CD4-positive, alpha-beta T cell (primary cell): ENCODE measurements at regions of chr2 and their contacts with region 1.

Region 1: DNA sequence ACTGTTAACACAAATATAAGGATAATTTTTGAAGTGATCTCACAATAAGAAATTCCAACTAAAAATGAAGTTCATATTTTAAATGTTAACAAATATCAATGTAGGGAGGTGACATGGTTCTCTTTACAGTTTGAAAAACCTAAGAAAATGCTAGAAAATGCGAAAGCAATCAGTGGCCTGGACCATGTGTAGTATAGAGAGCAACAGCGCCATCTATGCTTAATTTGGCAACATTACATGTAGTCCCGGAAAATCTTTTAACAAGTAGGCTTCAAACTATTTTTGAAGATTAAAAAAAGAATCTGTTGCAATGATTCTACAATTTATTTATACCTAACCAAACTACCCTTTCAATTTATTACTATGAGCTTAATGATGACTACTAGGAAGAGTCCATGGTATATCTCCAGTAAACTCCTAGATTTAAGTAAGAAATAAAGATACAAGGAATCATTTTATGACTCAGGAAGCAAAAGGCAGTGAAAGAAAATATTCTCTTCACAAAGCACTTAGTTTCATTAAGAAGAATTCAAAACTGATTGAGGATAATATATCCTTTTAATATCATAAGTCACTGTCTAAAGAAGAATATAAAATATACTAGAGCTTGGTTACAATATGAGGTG is 33.3 kb downstream of the NDUFA10 start:
- DNase-seq: peak in 3 of 14 experiments; percentile 55 to 68 (median 66)
- ATAC-seq: peak; percentile 69
- H3K4me3 ChIP-seq: no peak overlapping the region
- H3K4me3 Mint-ChIP-seq: no peak overlapping the region
- H3K27ac ChIP-seq: no peak overlapping the region
- H3K27ac Mint-ChIP-seq: no peak overlapping the region
- H3K4me1 ChIP-seq: no peaks in the 10 kb centered on the region
- H3K4me1 Mint-ChIP-seq: peaks cover 5% of the 10 kb centered on the region
- H3K27me3 ChIP-seq: no peaks in the 10 kb centered on the region
- H3K27me3 Mint-ChIP-seq: no peaks in the 10 kb centered on the region
- CTCF ChIP-seq: peak; percentile 89

Region 2: GRCh38 chr2:239035361-239036078 is 956.3 kb before region 1 on chr2:
- CTCF ChIA-PET with region 1: no interaction called
- POLR2A ChIA-PET with region 1: no interaction called
- intact Hi-C with region 1: loop called (anchors 1 to 2 kb)
- DNase-seq: peak; percentile 47 to 78 (median 62)
- ATAC-seq: peak; percentile 92
- H3K4me3 ChIP-seq: no peak overlapping the region
- H3K4me3 Mint-ChIP-seq: no peak overlapping the region
- H3K27ac ChIP-seq: no peak overlapping the region
- H3K27ac Mint-ChIP-seq: no peak overlapping the region
- H3K4me1 ChIP-seq: peaks cover 7% of the 10 kb centered on the region
- H3K4me1 Mint-ChIP-seq: no peaks in the 10 kb centered on the region
- H3K27me3 ChIP-seq: peaks cover 8 to 13% of the 10 kb centered on the region in 2 experiments
- H3K27me3 Mint-ChIP-seq: peaks cover 8% of the 10 kb centered on the region
- CTCF ChIP-seq: peak; percentile 88

Region 3: DNA sequence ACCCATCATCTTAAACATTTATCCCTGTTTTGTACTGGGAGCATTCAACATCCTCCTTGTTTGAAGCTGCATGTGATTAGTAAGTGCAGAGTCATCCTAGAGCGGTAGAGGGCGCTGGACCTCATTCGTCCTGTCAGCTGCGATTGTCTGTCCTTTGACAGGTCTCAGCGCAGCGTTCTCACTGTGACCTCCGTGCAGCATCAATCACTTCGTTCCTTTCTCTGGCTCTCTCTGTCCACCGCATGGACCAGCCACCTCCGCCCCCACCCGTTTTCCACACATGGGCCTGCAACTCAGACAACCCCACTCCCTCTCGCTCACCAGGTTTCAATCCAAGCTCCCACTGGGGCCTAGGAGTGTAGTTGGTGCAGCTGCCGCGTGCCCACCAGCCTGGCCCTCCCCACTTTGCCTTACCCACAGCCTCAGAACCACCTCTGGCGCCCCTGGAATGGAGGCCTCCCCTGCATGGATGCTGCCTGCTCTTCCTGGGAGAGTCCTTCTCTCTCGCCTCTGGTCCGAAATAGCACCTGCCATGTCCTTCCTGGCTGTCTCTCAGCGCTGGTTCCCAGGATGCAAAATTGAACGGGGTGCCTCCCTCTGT is 57.1 kb before region 1 on chr2:
- CTCF ChIA-PET with region 1: interaction called, 4 read pairs
- POLR2A ChIA-PET with region 1: no interaction called
- intact Hi-C with region 1: loop called (anchors 1 to 10 kb)
- DNase-seq: peak; percentile 31 to 80 (median 54)
- ATAC-seq: peak; percentile 84
- H3K4me3 ChIP-seq: no peak overlapping the region
- H3K4me3 Mint-ChIP-seq: no peak overlapping the region
- H3K27ac ChIP-seq: no peak overlapping the region
- H3K27ac Mint-ChIP-seq: no peak overlapping the region
- H3K4me1 ChIP-seq: peaks cover 4% of the 10 kb centered on the region
- H3K4me1 Mint-ChIP-seq: peaks cover 6% of the 10 kb centered on the region
- H3K27me3 ChIP-seq: no peaks in the 10 kb centered on the region
- H3K27me3 Mint-ChIP-seq: no peaks in the 10 kb centered on the region
- CTCF ChIP-seq: peak; percentile 70

Region 4: GRCh38 chr2:239979243-239980023 is 12.4 kb before region 1 on chr2:
- CTCF ChIA-PET with region 1: no interaction called
- POLR2A ChIA-PET with region 1: no interaction called
- intact Hi-C with region 1: no loop called
- DNase-seq: no peak
- ATAC-seq: no peak
- H3K4me3 ChIP-seq: no peak overlapping the region
- H3K4me3 Mint-ChIP-seq: no peak overlapping the region
- H3K27ac ChIP-seq: no peak overlapping the region
- H3K27ac Mint-ChIP-seq: no peak overlapping the region
- H3K4me1 ChIP-seq: no peaks in the 10 kb centered on the region
- H3K4me1 Mint-ChIP-seq: no peaks in the 10 kb centered on the region
- H3K27me3 ChIP-seq: no peaks in the 10 kb centered on the region
- H3K27me3 Mint-ChIP-seq: no peaks in the 10 kb centered on the region
- CTCF ChIP-seq: no peak

Region 5: DNA sequence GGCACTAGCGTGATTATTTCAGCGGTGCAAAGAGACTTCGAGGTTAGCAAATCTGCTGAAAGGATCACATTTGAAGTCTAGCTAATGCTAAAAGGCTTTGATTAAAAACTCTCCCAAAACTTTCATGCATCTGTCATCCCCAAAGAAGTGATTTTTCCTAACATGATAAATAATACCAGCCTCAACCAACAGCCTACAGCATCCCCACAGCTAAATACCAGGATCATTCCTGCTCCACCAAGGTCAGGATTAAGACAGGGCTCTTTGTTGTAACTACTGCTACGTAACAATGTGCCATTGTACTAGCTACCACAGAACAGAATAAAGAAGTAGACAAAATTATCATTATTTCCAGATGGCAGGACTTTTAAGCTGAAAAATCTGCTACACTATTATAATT is 59.9 kb after region 1 on chr2:
- CTCF ChIA-PET with region 1: no interaction called
- POLR2A ChIA-PET with region 1: no interaction called
- intact Hi-C with region 1: no loop called
- DNase-seq: no peak
- ATAC-seq: no peak
- H3K4me3 ChIP-seq: no peak overlapping the region
- H3K4me3 Mint-ChIP-seq: no peak overlapping the region
- H3K27ac ChIP-seq: no peak overlapping the region
- H3K27ac Mint-ChIP-seq: no peak overlapping the region
- H3K4me1 ChIP-seq: no peaks in the 10 kb centered on the region
- H3K4me1 Mint-ChIP-seq: no peaks in the 10 kb centered on the region
- H3K27me3 ChIP-seq: peaks cover 19 to 31% of the 10 kb centered on the region in 2 experiments
- H3K27me3 Mint-ChIP-seq: peaks cover 78% of the 10 kb centered on the region
- CTCF ChIP-seq: no peak

Region 6: GRCh38 chr2:240077442-240077841 is 85.6 kb after region 1 on chr2:
- CTCF ChIA-PET with region 1: no interaction called
- POLR2A ChIA-PET with region 1: no interaction called
- intact Hi-C with region 1: no loop called
- DNase-seq: no peak
- ATAC-seq: no peak
- H3K4me3 ChIP-seq: no peak overlapping the region
- H3K4me3 Mint-ChIP-seq: no peak overlapping the region
- H3K27ac ChIP-seq: no peak overlapping the region
- H3K27ac Mint-ChIP-seq: no peak overlapping the region
- H3K4me1 ChIP-seq: no peaks in the 10 kb centered on the region
- H3K4me1 Mint-ChIP-seq: no peaks in the 10 kb centered on the region
- H3K27me3 ChIP-seq: peaks cover 3 to 12% of the 10 kb centered on the region in 2 experiments
- H3K27me3 Mint-ChIP-seq: peaks cover 53% of the 10 kb centered on the region
- CTCF ChIP-seq: no peak

Region 7: DNA sequence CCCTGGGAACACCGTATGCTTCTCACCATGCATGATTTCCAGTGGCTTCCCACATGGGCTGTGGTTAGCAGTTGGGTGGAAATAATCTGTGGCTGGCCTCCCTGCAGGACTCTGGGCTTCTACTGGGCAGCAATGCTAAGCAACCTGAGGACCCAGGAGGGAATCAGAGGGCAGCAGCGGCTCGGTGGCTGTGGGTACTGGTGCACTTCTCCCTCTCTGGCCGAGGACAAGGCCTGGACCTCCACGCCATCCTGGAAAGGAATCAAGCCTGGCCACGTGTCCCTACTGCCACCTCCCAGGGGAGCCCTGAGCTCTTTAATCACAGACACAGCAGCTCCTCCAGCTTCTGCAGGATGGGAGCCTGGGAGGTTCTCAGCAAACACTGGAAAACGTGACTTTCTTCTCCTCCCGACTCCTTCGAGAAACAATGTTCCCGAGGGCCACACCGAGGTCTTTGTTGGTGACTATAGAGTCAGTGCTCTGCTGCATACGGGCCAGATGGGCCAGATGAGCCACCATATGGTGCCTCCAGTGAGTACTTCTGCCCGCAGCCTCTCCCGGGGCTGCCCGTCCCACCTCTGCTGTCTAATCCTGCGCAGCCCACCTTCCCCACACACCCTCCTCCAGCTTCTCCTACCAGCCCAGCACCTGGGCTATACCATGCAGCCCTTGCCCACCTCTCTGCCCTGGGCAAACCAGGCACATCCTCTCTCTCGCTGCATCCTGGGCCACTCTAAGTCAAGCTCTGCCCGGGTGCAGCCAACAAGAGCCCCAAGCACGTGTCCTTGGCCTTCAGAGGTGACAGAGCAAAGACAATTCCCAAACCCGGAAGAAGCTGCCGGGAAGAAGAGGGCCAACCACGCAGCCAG is 191.4 kb after region 1 on chr2:
- CTCF ChIA-PET with region 1: no interaction called
- POLR2A ChIA-PET with region 1: no interaction called
- intact Hi-C with region 1: no loop called
- DNase-seq: no peak
- ATAC-seq: no peak
- H3K4me3 ChIP-seq: no peak overlapping the region
- H3K4me3 Mint-ChIP-seq: no peak overlapping the region
- H3K27ac ChIP-seq: no peak overlapping the region
- H3K27ac Mint-ChIP-seq: no peak overlapping the region
- H3K4me1 ChIP-seq: no peaks in the 10 kb centered on the region
- H3K4me1 Mint-ChIP-seq: no peaks in the 10 kb centered on the region
- H3K27me3 ChIP-seq: peaks cover 0 to 4% of the 10 kb centered on the region in 2 experiments
- H3K27me3 Mint-ChIP-seq: peaks cover 39% of the 10 kb centered on the region
- CTCF ChIP-seq: no peak